Activated CD8-positive, alpha-beta T cell treated with anti-CD3 and anti-CD28 coated beads for 36 hours (primary cell): ENCODE measurements at regions of chr12 and their contacts with region 1.

Region 1: DNA sequence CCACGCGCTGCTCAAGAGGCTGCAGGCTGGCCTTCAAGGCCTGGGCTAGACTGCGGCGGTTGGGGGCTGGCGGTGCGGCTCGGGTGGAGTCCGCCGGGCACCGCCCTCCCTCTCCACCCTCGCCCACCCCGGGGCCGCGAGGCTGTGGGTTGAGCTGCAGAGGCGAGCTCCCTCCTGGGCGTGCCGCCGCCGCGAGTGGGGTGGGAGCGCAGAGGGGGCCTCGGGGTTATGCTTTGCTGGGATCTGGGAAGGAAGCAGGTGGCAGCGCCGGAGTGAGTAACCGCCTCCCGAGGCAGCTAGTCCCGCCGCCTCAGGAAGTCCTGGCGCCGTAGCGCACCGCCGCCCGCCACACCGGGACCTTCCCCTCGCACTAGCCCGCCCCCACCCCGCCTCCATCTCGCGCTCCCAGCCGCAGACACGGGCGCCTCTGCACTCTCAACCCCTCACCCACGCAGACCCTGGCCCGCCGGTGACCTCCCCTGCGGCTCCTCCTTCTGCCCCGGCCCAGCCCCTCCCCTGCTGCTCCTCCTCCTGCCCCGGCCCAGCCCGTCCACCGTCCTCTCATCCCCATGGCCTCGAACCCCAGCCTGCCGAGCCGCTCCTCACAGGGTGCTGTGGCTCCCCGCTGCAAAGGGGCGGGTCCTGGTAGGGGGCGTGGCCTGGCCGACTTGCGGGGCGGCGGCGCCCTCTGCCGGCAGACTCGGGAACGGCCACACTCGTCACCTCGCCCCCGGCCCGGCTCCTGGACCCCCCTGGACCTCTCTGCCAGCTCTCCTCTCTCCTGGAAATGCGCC is 16.6 kb downstream of the TAMALIN start:
- DNase-seq: peak; percentile 96
- ATAC-seq: peak; percentile 69
- H3K4me3 Mint-ChIP-seq: peak overlapping the region; percentile 76
- H3K27ac Mint-ChIP-seq: peak overlapping the region; percentile 96
- H3K4me1 Mint-ChIP-seq: peaks cover 41% of the 10 kb centered on the region
- H3K27me3 Mint-ChIP-seq: peaks cover 1% of the 10 kb centered on the region
- CTCF ChIP-seq: peak; percentile 96

Region 2: DNA sequence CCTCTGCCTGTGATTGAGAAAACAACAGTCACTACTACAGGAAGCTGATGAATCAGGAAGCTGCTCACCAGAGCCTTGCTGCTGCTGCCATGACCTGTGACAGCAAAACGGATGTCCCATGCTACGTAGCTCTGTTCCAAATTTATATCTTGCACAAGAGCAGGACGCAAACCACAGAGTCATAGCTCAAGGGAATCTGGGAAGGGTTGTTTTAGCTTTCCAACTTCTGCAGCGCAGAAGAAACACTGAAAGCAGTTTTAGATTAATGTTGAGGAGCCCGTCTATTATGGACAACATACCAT is 137.4 kb before region 1 on chr12:
- CTCF ChIA-PET with region 1: interaction called, 11 read pairs
- POLR2A ChIA-PET with region 1: no interaction called
- intact Hi-C with region 1: no loop called
- DNase-seq: peak; percentile 67
- ATAC-seq: peak; percentile 95
- H3K4me3 Mint-ChIP-seq: peak overlapping the region; percentile 9
- H3K27ac Mint-ChIP-seq: peak overlapping the region; percentile 83
- H3K4me1 Mint-ChIP-seq: peaks cover 15% of the 10 kb centered on the region
- H3K27me3 Mint-ChIP-seq: peaks cover 1% of the 10 kb centered on the region
- CTCF ChIP-seq: no peak

Region 3: GRCh38 chr12:51905471-51906429 is 117.6 kb before region 1 on chr12:
- CTCF ChIA-PET with region 1: no interaction called
- POLR2A ChIA-PET with region 1: no interaction called
- intact Hi-C with region 1: no loop called
- DNase-seq: no peak
- ATAC-seq: no peak
- H3K4me3 Mint-ChIP-seq: no peak overlapping the region
- H3K27ac Mint-ChIP-seq: no peak overlapping the region
- H3K4me1 Mint-ChIP-seq: no peaks in the 10 kb centered on the region
- H3K27me3 Mint-ChIP-seq: peaks cover 22% of the 10 kb centered on the region
- CTCF ChIP-seq: no peak

Region 4: GRCh38 chr12:51915951-51916350 is 107.4 kb before region 1 on chr12:
- CTCF ChIA-PET with region 1: no interaction called
- POLR2A ChIA-PET with region 1: no interaction called
- intact Hi-C with region 1: no loop called
- DNase-seq: no peak
- ATAC-seq: no peak
- H3K4me3 Mint-ChIP-seq: no peak overlapping the region
- H3K27ac Mint-ChIP-seq: no peak overlapping the region
- H3K4me1 Mint-ChIP-seq: no peaks in the 10 kb centered on the region
- H3K27me3 Mint-ChIP-seq: peaks cover 2% of the 10 kb centered on the region
- CTCF ChIP-seq: no peak

Region 5: DNA sequence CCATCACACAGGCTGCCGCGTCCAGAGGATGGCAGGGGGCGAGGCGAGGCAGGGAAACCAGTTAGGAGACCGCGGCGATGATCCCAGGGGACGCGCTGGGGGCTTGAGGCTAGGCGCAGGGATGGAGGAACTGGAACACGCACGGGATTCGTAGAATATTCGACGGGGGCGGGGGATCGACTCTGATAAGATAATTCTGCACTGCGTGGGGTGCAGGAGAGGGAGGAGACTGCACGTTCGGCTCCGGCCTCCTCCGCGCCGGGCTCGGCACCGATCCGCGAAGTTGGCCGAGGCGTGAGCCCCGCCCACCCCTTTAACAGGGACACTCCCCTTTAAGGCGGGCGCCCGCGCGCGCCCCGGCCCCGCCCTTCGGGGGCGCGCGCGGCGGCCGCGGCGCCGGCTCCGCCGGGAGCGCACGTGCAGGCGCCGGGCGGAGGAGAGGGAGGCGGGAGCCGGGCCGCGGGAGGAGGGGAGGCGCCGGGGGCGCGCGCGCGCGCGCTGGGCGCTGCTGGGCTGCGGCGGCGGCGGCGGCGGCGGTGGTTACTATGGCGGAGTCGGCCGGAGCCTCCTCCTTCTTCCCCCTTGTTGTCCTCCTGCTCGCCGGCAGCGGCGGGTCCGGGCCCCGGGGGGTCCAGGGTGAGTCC is 72.1 kb before region 1 on chr12 and contains the start of gene ACVR1B:
- CTCF ChIA-PET with region 1: interaction called, 12 read pairs
- POLR2A ChIA-PET with region 1: interaction called, 3 read pairs
- intact Hi-C with region 1: no loop called
- DNase-seq: peak; percentile 92
- ATAC-seq: peak; percentile 97
- H3K4me3 Mint-ChIP-seq: peak within 1 kb of the TSS; percentile 86
- H3K27ac Mint-ChIP-seq: peak within 1 kb of the TSS; percentile 69
- H3K4me1 Mint-ChIP-seq: peaks cover 35% of the 10 kb centered on the region
- H3K27me3 Mint-ChIP-seq: peaks cover 8% of the 10 kb centered on the region
- CTCF ChIP-seq: no peak
- total RNA-seq, gene ACVR1B: 7.5 to 8.6 TPM

Region 6: DNA sequence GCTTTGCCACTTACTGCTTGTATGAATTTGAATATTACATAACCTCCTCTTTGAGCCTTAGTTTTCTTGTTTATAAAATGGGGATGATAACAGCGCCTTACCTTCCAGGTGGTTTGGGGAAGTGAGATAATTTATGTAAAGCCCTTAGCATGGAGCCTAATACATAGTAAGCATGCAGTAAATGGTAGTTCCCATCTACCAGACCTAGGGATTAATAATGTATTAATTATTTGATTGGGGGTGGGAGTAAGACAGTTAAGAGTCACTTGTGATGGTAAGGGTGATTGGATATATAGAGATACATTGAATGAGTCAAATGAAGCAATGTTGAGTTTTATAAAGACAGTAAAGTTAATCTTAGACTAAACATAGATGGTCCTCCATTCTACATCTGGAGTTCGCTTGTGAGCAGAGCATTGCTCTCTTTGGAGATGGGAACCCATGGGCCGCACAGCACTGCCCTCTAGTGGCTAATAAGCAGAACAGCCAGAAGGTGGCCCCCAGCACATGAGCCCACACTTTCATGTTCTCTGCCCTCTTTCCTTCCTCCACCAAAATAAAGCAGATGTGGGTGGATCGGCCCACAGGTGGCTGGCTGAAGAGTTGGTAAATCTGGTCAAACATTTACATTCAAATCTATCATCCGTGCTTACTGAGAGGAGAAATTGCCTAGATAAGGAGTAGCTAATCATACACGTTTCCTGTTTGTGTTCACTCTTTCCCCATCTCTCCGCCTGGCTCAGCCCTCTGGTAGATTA is 43.1 kb before region 1 on chr12:
- CTCF ChIA-PET with region 1: interaction called, 411 read pairs
- POLR2A ChIA-PET with region 1: interaction called, 5 read pairs
- intact Hi-C with region 1: no loop called
- DNase-seq: peak; percentile 81
- ATAC-seq: peak; percentile 99
- H3K4me3 Mint-ChIP-seq: no peak overlapping the region
- H3K27ac Mint-ChIP-seq: peak overlapping the region; percentile 68
- H3K4me1 Mint-ChIP-seq: peaks cover 28% of the 10 kb centered on the region
- H3K27me3 Mint-ChIP-seq: no peaks in the 10 kb centered on the region
- CTCF ChIP-seq: peak; percentile 97

Region 7: GRCh38 chr12:52004042-52004648 is 19.2 kb before region 1 on chr12:
- CTCF ChIA-PET with region 1: interaction called, 411 read pairs
- POLR2A ChIA-PET with region 1: interaction called, 74 read pairs
- intact Hi-C with region 1: no loop called
- DNase-seq: peak; percentile 28
- ATAC-seq: no peak
- H3K4me3 Mint-ChIP-seq: no peak overlapping the region
- H3K27ac Mint-ChIP-seq: no peak overlapping the region
- H3K4me1 Mint-ChIP-seq: peaks cover 20% of the 10 kb centered on the region
- H3K27me3 Mint-ChIP-seq: peaks cover 9% of the 10 kb centered on the region
- CTCF ChIP-seq: peak; percentile 44

Region 8: GRCh38 chr12:52050761-52051541 is 27.6 kb after region 1 on chr12 and contains the start of gene NR4A1:
- CTCF ChIA-PET with region 1: interaction called, 602 read pairs
- POLR2A ChIA-PET with region 1: interaction called, 16 read pairs
- intact Hi-C with region 1: no loop called
- DNase-seq: peak; percentile 99
- ATAC-seq: peak; percentile 93
- H3K4me3 Mint-ChIP-seq: peak within 1 kb of the TSS; percentile 95
- H3K27ac Mint-ChIP-seq: peak within 1 kb of the TSS; percentile 93
- H3K4me1 Mint-ChIP-seq: peaks cover 39% of the 10 kb centered on the region
- H3K27me3 Mint-ChIP-seq: no peaks in the 10 kb centered on the region
- CTCF ChIP-seq: no peak
- total RNA-seq, gene NR4A1: 120 to 128 TPM

Region 9: GRCh38 chr12:52091869-52092268 is 68.5 kb after region 1 on chr12:
- CTCF ChIA-PET with region 1: interaction called, 394 read pairs
- POLR2A ChIA-PET with region 1: interaction called, 5 read pairs
- intact Hi-C with region 1: no loop called
- DNase-seq: no peak
- ATAC-seq: no peak
- H3K4me3 Mint-ChIP-seq: no peak overlapping the region
- H3K27ac Mint-ChIP-seq: no peak overlapping the region
- H3K4me1 Mint-ChIP-seq: no peaks in the 10 kb centered on the region
- H3K27me3 Mint-ChIP-seq: peaks cover 36% of the 10 kb centered on the region
- CTCF ChIP-seq: no peak